ENCODE measurements at regions of chr2 and their contacts with region 1.

Region 1: DNA sequence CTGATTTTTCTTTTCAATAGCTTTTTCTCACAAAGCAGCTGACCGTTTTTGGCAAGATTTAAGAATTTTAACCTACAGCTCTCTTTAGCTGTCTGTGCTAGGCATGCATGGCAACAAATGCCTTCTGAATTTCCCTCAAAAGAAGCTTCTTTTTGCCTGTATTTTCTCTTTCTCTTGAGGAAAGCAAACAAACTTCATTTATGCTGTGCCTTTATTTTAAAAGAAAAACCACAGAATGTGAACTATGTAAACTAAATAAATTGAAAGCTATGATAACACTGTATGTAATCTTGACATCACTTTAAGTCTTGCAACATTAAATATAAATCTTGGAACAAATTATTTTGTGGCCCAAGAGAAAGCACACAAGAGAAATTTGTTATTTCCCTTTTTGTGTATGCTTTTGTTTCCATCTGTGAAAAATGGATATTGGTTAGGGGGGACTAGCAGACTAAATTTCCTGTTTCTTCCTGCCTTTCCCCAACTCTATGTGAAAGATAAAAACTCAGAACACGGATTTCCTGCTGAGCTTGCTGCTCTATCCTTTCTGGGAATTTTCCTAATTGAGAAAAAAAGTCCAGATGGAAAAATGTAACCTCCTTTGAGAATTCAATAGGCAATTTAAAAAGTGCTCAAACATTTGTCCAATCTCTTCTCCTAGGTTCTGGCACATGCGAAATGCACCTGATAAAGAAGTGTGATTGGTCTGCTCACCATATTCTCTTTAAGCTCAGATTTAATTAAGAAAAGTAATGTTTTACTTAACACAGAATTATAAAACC is 20.9 kb upstream of the TFPI start:
- DNase-seq: no peak
- H3K4me3 ChIP-seq: no peak overlapping the region
- H3K27ac ChIP-seq: peak overlapping the region in 21 of 59 donors; percentile 1 to 56 (median 35)
- H3K27me3 ChIP-seq: no peaks in the 10 kb centered on the region
- CTCF ChIP-seq: no peak

Region 2: GRCh38 chr2:188512456-188512855 is 937.3 kb after region 1 on chr2:
- intact Hi-C with region 1: loop called (anchors 10 kb)
- DNase-seq: no peak
- H3K4me3 ChIP-seq: no peak overlapping the region
- H3K27ac ChIP-seq: no peak overlapping the region
- H3K27me3 ChIP-seq: no peaks in the 10 kb centered on the region
- CTCF ChIP-seq: peak; percentile 32 to 87 (median 68)

Measured in dorsolateral prefrontal cortex (tissue), 120 donors.